ENCODE measurements at regions of chr2 and their contacts with region 1.

Region 1: DNA sequence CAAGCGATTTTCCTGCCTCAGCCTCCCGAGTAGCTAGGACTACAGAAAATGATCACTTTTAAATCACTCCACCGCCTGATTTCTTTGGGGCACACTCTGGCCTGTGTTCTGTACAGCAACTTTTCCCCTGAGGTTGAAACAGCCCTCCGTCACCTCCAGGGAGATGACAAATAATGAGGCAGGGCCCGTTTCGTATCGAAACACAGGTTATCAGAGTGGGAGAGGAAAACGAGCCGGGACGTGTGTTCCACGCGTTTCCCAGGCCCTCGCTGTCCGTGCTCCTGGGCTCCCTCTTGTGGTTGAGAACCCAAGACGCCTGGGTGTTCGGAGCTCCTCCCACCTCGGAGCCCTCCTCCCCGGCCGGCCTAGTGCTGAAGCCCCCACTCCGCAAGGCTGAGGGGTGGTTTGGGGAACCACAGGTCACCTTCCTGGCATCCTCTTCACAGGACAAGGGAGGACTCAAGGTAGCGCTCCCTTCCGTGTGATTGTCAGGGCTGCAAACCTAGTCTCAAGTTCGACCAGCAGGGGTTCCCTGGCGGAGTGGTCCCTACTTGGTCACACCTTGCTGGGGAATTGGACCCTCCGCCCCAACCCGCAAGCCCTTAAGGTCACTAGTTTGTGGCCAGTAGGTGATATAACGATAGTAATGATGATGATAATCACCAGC is 12.8 kb downstream of the ATP6V1B1 start:
- DNase-seq: peak; percentile 67 to 89
- ATAC-seq: peak; percentile 87 to 99 (median 98)
- H3K4me3 ChIP-seq: no peak overlapping the region
- H3K4me3 Mint-ChIP-seq: peak overlapping the region; percentile 87
- H3K27ac ChIP-seq: no peak overlapping the region
- H3K27ac Mint-ChIP-seq: peak overlapping the region in 1 of 2 donors; percentile 33
- H3K4me1 ChIP-seq: peaks cover 7% of the 10 kb centered on the region
- H3K4me1 Mint-ChIP-seq: peaks cover 9 to 11% of the 10 kb centered on the region in 2 donors
- H3K27me3 ChIP-seq: peaks cover 3% of the 10 kb centered on the region
- H3K27me3 Mint-ChIP-seq: peaks cover 18 to 26% of the 10 kb centered on the region in 2 donors
- CTCF ChIP-seq: peak; percentile 73

Region 2: GRCh38 chr2:70301344-70302194 is 646.9 kb before region 1 on chr2 and contains the start of gene FAM136A:
- intact Hi-C with region 1: loop called (anchors 10 kb)
- DNase-seq: peak; percentile 88 to 92
- ATAC-seq: peak; percentile 94 to 98 (median 94)
- H3K4me3 ChIP-seq: peak within 1 kb of the TSS; percentile 85
- H3K4me3 Mint-ChIP-seq: peak within 1 kb of the TSS; percentile 95
- H3K27ac ChIP-seq: peak within 1 kb of the TSS; percentile 69
- H3K27ac Mint-ChIP-seq: peak within 1 kb of the TSS; percentile 79 to 83
- H3K4me1 ChIP-seq: peaks cover 18% of the 10 kb centered on the region
- H3K4me1 Mint-ChIP-seq: peaks cover 19 to 23% of the 10 kb centered on the region in 2 donors
- H3K27me3 ChIP-seq: no peaks in the 10 kb centered on the region
- H3K27me3 Mint-ChIP-seq: no peaks in the 10 kb centered on the region
- CTCF ChIP-seq: peak; percentile 76
- total RNA-seq, gene FAM136A: 32.5 to 38.3 (median 36.6) TPM

Region 3: GRCh38 chr2:70472221-70472890 is 476.1 kb before region 1 on chr2:
- intact Hi-C with region 1: no loop called
- DNase-seq: no peak
- ATAC-seq: no peak
- H3K4me3 ChIP-seq: no peak overlapping the region
- H3K4me3 Mint-ChIP-seq: peak overlapping the region; percentile 73
- H3K27ac ChIP-seq: no peak overlapping the region
- H3K27ac Mint-ChIP-seq: peak overlapping the region; percentile 81 to 84
- H3K4me1 ChIP-seq: peaks cover 65% of the 10 kb centered on the region
- H3K4me1 Mint-ChIP-seq: peaks cover 79 to 83% of the 10 kb centered on the region in 2 donors
- H3K27me3 ChIP-seq: no peaks in the 10 kb centered on the region
- H3K27me3 Mint-ChIP-seq: no peaks in the 10 kb centered on the region
- CTCF ChIP-seq: no peak

Region 4: GRCh38 chr2:70671092-70671675 is 277.3 kb before region 1 on chr2:
- intact Hi-C with region 1: no loop called
- DNase-seq: no peak
- ATAC-seq: no peak
- H3K4me3 ChIP-seq: no peak overlapping the region
- H3K4me3 Mint-ChIP-seq: no peak overlapping the region
- H3K27ac ChIP-seq: no peak overlapping the region
- H3K27ac Mint-ChIP-seq: no peak overlapping the region
- H3K4me1 ChIP-seq: no peaks in the 10 kb centered on the region
- H3K4me1 Mint-ChIP-seq: no peaks in the 10 kb centered on the region
- H3K27me3 ChIP-seq: no peaks in the 10 kb centered on the region
- H3K27me3 Mint-ChIP-seq: peaks cover 0 to 4% of the 10 kb centered on the region in 2 donors
- CTCF ChIP-seq: no peak

Region 5: GRCh38 chr2:70789304-70790135 is 158.9 kb before region 1 on chr2:
- intact Hi-C with region 1: loop called (anchors 1 kb)
- DNase-seq: peak; percentile 58 to 80
- ATAC-seq: peak; percentile 58 to 86 (median 76)
- H3K4me3 ChIP-seq: peak overlapping the region; percentile 18
- H3K4me3 Mint-ChIP-seq: peak overlapping the region; percentile 93
- H3K27ac ChIP-seq: no peak overlapping the region
- H3K27ac Mint-ChIP-seq: peak overlapping the region in 1 of 2 donors; percentile 34
- H3K4me1 ChIP-seq: peaks cover 14% of the 10 kb centered on the region
- H3K4me1 Mint-ChIP-seq: peaks cover 8 to 18% of the 10 kb centered on the region in 2 donors
- H3K27me3 ChIP-seq: peaks cover 24% of the 10 kb centered on the region
- H3K27me3 Mint-ChIP-seq: peaks cover 45 to 65% of the 10 kb centered on the region in 2 donors
- CTCF ChIP-seq: peak; percentile 71

Region 6: DNA sequence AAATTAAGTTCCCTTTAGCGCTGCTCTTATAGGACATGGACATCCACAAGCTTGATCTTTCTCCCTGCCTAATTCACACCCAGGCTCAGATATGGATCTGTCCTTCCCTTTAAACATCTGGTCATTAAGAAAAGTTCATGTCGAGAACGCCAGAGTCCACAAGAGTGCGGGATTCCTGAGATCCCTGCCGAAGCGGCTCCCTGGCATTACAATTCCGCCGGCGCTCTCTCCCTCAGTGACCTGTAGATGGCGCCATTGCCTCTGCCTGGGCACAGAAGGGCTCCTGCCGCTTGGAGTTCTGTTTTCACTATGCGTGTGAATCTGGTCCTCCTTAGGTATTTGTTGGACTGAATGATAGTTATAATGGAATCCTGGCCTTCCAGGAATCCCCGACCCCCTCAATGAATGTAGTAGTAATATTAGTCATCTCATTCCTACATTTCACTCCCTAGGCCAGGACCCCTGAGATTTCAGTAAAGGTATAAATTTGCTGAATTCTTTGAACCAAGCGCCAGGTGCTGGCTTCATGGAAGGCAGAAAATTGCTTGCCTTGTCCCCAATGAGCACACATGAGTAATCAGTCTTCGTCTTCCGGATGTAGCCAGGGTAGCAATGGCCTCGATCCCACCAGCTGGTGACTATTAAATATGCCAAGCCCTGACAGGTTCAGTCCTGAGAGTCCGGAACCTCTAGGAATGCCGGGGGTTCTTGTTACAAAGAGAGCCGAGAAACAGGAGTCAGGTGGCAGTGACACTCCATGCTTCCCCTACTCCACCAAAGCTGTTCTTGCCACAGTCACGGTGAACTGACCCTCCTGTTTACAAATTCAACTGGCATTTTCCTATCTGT is 86.5 kb before region 1 on chr2:
- intact Hi-C with region 1: loop called (anchors 1 kb)
- DNase-seq: peak; percentile 72 to 85
- ATAC-seq: peak; percentile 81 to 99 (median 95)
- H3K4me3 ChIP-seq: no peak overlapping the region
- H3K4me3 Mint-ChIP-seq: peak overlapping the region; percentile 43
- H3K27ac ChIP-seq: no peak overlapping the region
- H3K27ac Mint-ChIP-seq: peak overlapping the region in 1 of 2 donors; percentile 65
- H3K4me1 ChIP-seq: peaks cover 6% of the 10 kb centered on the region
- H3K4me1 Mint-ChIP-seq: peaks cover 6 to 15% of the 10 kb centered on the region in 2 donors
- H3K27me3 ChIP-seq: peaks cover 5% of the 10 kb centered on the region
- H3K27me3 Mint-ChIP-seq: peaks cover 7 to 23% of the 10 kb centered on the region in 2 donors
- CTCF ChIP-seq: peak; percentile 96

Region 7: GRCh38 chr2:70871398-70872211 is 76.9 kb before region 1 on chr2:
- intact Hi-C with region 1: loop called (anchors 1 kb)
- DNase-seq: peak; percentile 84 to 89
- ATAC-seq: peak; percentile 90 to 100 (median 99)
- H3K4me3 ChIP-seq: no peak overlapping the region
- H3K4me3 Mint-ChIP-seq: no peak overlapping the region
- H3K27ac ChIP-seq: no peak overlapping the region
- H3K27ac Mint-ChIP-seq: no peak overlapping the region
- H3K4me1 ChIP-seq: peaks cover 11% of the 10 kb centered on the region
- H3K4me1 Mint-ChIP-seq: peaks cover 6 to 7% of the 10 kb centered on the region in 2 donors
- H3K27me3 ChIP-seq: peaks cover 25% of the 10 kb centered on the region
- H3K27me3 Mint-ChIP-seq: peaks cover 27 to 34% of the 10 kb centered on the region in 2 donors
- CTCF ChIP-seq: peak; percentile 90

Region 8: DNA sequence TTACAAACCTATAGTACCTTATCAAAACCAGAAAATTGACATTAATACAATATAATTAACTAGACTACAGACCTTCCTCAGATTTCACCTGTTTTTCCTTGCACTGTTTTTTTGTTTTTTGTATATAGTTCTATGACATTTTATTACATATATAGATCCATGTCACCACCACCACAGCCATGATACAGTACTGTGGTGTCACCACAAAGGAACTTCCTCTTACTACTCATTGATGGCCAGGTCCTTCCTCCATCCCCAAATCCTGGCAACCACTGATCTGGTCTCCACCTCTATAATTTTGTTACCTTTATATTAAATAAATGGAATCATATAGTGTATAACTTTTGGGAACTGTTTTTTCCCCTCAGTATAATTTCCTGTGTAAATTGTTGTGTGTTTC is 32.2 kb before region 1 on chr2:
- intact Hi-C with region 1: no loop called
- DNase-seq: no peak
- ATAC-seq: no peak
- H3K4me3 ChIP-seq: no peak overlapping the region
- H3K4me3 Mint-ChIP-seq: no peak overlapping the region
- H3K27ac ChIP-seq: no peak overlapping the region
- H3K27ac Mint-ChIP-seq: no peak overlapping the region
- H3K4me1 ChIP-seq: no peaks in the 10 kb centered on the region
- H3K4me1 Mint-ChIP-seq: no peaks in the 10 kb centered on the region
- H3K27me3 ChIP-seq: peaks cover 8% of the 10 kb centered on the region
- H3K27me3 Mint-ChIP-seq: peaks cover 37 to 43% of the 10 kb centered on the region in 2 donors
- CTCF ChIP-seq: no peak

Measured in natural killer cell (primary cell).